Activated CD4-positive, alpha-beta T cell treated with anti-CD3 and anti-CD28 coated beads, Interleukin-2, amount 10 ng/mL, durations not matched to agents 24 days and 14 days (primary cell): ENCODE measurements at regions of chr10 and their contacts with region 1.

Region 1: DNA sequence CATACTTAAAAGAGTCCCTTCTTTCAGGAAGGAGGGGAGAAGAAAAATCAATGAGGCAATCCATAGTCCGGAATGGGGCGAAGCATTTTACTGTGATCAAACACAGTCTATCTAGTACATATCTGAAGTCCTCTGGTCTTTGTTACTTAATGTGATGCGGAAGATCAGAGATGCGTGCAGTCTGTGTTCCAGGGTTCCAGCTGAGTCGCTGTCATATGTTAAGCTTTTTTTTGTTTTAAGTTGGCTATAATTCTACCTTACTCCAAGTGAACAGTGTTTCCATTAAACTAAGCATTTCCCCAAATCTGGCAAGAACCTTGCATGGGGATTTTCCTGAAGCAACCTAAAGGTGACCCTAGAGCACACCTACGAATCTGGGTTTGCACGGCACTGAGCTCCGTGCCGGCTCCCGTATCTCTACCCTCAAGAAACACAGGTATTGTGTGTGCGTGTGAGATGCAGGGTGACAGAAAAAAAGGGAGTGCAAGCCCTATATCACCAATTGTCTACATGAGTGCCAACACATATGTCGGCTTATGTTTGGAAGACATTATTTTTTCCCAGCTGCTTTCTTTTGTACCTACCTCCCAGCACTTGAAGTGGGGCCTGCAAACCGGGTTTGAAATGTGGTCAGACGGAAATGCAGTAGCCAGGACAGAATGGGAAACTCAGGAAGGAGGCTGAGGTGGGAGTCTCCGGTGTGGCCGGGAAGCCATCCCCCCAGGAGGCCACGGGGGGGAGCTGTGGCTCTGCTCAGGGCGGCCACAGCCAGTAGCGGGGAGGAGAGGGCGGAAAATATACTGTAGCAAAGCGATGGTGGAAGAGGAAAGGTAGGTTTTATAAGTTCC is 435.8 kb upstream of the MGMT start:
- DNase-seq: peak; percentile 87
- H3K4me3 Mint-ChIP-seq: no peak overlapping the region
- H3K27ac Mint-ChIP-seq: no peak overlapping the region
- H3K4me1 Mint-ChIP-seq: peaks cover 24% of the 10 kb centered on the region
- H3K27me3 Mint-ChIP-seq: peaks cover 29% of the 10 kb centered on the region

Region 2: DNA sequence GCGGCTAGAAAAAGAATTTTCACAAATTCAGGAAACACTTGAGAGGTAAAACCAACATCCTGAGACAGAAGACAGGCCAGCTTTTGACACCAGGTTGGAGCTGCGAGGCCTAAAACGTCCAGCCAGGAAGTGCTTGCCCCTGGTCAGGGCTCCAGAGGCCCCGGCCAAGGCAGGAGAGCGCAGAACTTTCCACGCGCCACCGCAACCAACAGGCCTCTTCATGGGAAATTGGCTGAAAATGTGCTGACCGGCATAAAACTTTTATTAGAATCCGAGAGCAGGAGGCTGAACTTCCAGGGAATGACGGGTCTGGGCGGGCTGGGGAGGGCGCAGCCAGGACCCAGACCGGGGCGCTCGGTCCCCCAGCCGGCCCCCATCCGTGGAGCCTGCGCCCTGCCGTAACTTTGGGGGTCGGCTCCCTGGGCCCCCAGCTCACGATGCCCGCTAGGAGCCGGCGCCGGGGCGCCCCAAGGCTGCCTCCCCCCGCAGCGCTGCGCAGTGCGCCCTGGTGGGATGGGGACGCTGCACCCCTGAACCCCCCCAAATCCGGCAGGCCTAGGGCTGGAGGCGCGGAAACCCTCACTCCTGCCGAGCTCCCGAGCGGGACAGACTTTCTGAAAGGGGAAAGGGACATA is 491.0 kb before region 1 on chr10:
- intact Hi-C with region 1: no loop called
- DNase-seq: no peak
- H3K4me3 Mint-ChIP-seq: no peak overlapping the region
- H3K27ac Mint-ChIP-seq: no peak overlapping the region
- H3K4me1 Mint-ChIP-seq: no peaks in the 10 kb centered on the region
- H3K27me3 Mint-ChIP-seq: peaks cover 48% of the 10 kb centered on the region

Region 3: GRCh38 chr10:128993443-128993842 is 37.8 kb before region 1 on chr10:
- intact Hi-C with region 1: no loop called
- DNase-seq: no peak
- H3K4me3 Mint-ChIP-seq: no peak overlapping the region
- H3K27ac Mint-ChIP-seq: no peak overlapping the region
- H3K4me1 Mint-ChIP-seq: no peaks in the 10 kb centered on the region
- H3K27me3 Mint-ChIP-seq: peaks cover 2% of the 10 kb centered on the region

Region 4: DNA sequence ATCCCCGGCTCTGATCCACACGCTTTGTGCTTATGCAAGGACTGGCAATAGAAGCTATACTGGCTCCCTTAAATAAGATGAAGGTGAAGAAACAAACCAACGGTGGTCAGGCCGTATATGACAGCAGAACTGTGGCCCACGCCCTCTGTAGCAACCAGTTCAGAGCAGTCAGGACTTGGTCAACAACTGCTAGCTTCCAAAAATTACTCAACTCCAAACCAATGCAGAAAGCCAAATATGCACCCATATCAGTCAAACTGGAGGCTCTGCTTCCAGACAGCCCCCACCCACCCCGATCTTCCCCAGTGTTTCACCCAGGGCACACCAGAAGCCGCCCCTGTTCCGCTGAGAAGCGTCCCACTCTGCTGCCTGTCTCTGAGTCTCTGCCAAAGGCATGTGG is 213.5 kb after region 1 on chr10:
- intact Hi-C with region 1: no loop called
- DNase-seq: no peak
- H3K4me3 Mint-ChIP-seq: no peak overlapping the region
- H3K27ac Mint-ChIP-seq: no peak overlapping the region
- H3K4me1 Mint-ChIP-seq: no peaks in the 10 kb centered on the region
- H3K27me3 Mint-ChIP-seq: no peaks in the 10 kb centered on the region

Region 5: GRCh38 chr10:129971381-129972144 is 940.3 kb after region 1 on chr10:
- intact Hi-C with region 1: loop called (anchors 5 kb)
- DNase-seq: no peak
- H3K4me3 Mint-ChIP-seq: peak overlapping the region; percentile 45
- H3K27ac Mint-ChIP-seq: peak overlapping the region; percentile 75
- H3K4me1 Mint-ChIP-seq: peaks cover 8% of the 10 kb centered on the region
- H3K27me3 Mint-ChIP-seq: peaks cover 62% of the 10 kb centered on the region